ENCODE measurements at regions of chr1 and their contacts with region 1.

Region 1: GRCh38 chr1:210373885-210374599 is 45.3 kb downstream of the HHAT start:
- DNase-seq: peak; percentile 64
- CTCF ChIP-seq: peak; percentile 57

Region 2: DNA sequence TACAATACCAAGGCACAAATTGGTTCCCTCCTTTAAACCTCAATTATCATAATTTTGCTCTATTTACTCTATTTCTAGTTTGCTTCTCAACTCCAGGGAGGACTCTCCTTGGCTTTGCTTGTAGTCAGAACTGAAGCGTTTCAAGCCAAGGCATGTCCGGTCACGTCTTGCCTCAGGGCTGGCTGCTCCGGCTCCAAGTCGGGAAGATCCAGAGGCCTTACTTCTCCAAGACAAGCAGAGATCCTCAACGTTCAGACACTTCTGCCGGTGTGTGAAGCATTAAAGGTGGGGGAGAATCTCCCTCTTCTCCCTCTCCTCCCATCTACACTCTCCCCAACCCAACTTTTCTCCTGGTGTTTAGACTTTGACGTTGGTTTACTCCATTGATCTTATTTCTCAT is 52.5 kb before region 1 on chr1:
- CTCF ChIA-PET with region 1: no interaction called
- POLR2A ChIA-PET with region 1: no interaction called
- DNase-seq: no peak
- CTCF ChIP-seq: no peak

Region 3: GRCh38 chr1:210362526-210362925 is 11.5 kb before region 1 on chr1:
- CTCF ChIA-PET with region 1: interaction called, 35 read pairs
- POLR2A ChIA-PET with region 1: interaction called, 4 read pairs
- DNase-seq: no peak
- CTCF ChIP-seq: no peak

Region 4: GRCh38 chr1:210384630-210385029 is 10.6 kb after region 1 on chr1:
- CTCF ChIA-PET with region 1: interaction called, 22 read pairs
- POLR2A ChIA-PET with region 1: no interaction called
- DNase-seq: no peak
- CTCF ChIP-seq: no peak

Region 5: GRCh38 chr1:210394281-210394821 is 20.3 kb after region 1 on chr1:
- CTCF ChIA-PET with region 1: interaction called, 20 read pairs
- POLR2A ChIA-PET with region 1: no interaction called
- DNase-seq: no peak
- CTCF ChIP-seq: no peak

Region 6: GRCh38 chr1:210400043-210400840 is 26.2 kb after region 1 on chr1:
- CTCF ChIA-PET with region 1: interaction called, 20 read pairs
- POLR2A ChIA-PET with region 1: no interaction called
- DNase-seq: peak; percentile 68
- CTCF ChIP-seq: peak; percentile 68

Region 7: GRCh38 chr1:210938416-210938925 is 564.4 kb after region 1 on chr1:
- CTCF ChIA-PET with region 1: no interaction called
- POLR2A ChIA-PET with region 1: no interaction called
- DNase-seq: no peak
- CTCF ChIP-seq: no peak